ENCODE measurements at regions of chr1 and their contacts with region 1.

Region 1: DNA sequence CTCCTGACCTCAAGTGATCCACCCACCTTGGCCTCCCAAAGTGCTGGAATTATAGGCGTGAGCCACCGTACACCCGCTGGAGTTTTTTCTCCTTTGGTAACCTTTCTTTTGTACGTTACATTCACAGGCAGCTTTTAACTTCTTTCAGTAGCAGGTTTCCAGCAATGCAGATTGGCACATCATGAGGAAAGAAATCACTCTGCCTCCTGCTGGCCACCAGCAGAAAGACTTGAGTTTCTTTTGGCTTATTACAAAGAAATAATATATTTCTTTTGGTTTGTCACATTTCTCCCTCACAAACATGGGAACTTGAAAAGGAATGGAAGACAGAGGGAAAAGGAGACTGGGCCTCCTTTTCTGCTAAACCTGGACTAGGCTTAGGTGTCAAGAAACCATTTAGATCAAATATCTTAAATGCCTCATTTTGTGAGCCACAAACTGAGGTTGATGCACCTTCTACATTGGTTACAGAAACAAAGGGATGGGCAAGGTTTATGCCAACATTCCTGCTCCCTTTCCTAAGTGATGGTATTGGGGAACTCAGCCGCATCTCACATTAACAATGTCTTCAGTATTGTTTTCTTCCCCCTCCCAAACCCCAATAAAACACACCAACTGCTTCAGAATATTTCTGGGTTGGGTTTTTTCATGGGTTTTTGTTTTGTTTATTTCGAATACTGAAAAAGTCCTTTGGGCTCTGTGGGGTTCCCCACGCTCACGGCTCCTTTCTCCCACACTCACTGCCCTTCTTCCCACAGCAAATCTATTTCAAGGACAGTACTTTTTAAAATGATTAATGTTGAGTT is 7.7 kb downstream of the ENSA start:
- DNase-seq: peak; percentile 66 to 71 (median 69)
- H3K4me3 ChIP-seq: no peak overlapping the region
- H3K4me3 Mint-ChIP-seq: peak overlapping the region in 7 of 8 donors; percentile 8 to 61 (median 35)
- H3K27ac ChIP-seq: peak overlapping the region; percentile 53
- H3K27ac Mint-ChIP-seq: peak overlapping the region; percentile 82 to 95 (median 91)
- H3K4me1 ChIP-seq: peaks cover 38% of the 10 kb centered on the region
- H3K4me1 Mint-ChIP-seq: peaks cover 32 to 64% (median 51%) of the 10 kb centered on the region in 4 donors
- H3K27me3 ChIP-seq: no peaks in the 10 kb centered on the region
- H3K27me3 Mint-ChIP-seq: no peaks in the 10 kb centered on the region

Region 2: DNA sequence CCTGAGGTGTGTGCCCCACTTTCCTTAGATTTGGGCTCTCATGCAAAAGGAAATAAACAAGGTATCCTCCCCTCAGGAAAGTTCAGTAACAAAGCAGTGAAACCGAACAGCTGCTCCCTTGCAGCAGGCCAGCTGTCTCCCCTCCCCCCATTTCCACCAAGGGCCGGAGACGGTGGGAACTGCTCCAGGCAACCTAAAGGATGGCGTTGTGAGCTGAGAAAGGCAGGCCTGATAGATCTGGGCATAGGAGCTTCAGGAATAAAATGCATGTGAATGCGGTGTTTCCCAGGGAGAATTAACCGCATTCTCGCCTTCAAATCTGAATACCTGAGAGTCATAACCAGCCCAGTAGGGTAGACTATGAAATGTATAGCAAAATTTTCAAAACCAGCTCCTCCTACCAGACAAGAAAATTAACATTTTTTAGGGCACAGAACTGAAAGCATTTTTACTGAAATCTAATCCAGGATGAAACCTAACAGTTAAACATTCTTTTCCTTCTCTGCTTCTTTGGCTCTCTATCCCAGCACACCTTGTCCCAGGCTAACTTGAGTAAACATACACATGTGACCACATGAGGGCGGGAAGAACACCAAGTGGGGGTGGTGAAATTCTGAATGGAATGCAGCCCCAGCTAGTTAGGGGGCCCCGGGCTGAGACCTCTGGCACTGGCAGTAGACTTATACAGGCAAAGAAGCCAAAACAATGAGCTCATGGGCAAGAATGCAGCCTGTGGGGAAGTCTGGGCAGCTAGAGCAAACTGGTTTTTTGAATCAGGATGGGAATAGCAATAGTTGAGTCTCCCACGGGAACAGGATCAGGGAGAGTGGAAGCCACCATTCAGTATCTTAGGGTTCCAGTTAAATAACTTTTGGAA is 53.7 kb before region 1 on chr1:
- CTCF ChIA-PET with region 1: interaction called, 501 read pairs
- POLR2A ChIA-PET with region 1: interaction called, 439 read pairs
- intact Hi-C with region 1: no loop called
- DNase-seq: peak in 3 of 5 donors; percentile 33 to 72 (median 67)
- H3K4me3 ChIP-seq: peak overlapping the region; percentile 43 to 45
- H3K4me3 Mint-ChIP-seq: peak overlapping the region; percentile 87 to 98 (median 89)
- H3K27ac ChIP-seq: peak overlapping the region; percentile 58
- H3K27ac Mint-ChIP-seq: peak overlapping the region; percentile 93 to 99 (median 94)
- H3K4me1 ChIP-seq: peaks cover 93% of the 10 kb centered on the region
- H3K4me1 Mint-ChIP-seq: peaks cover 48 to 97% (median 74%) of the 10 kb centered on the region in 4 donors
- H3K27me3 ChIP-seq: no peaks in the 10 kb centered on the region
- H3K27me3 Mint-ChIP-seq: no peaks in the 10 kb centered on the region

Region 3: GRCh38 chr1:150572918-150573647 is 48.6 kb before region 1 on chr1:
- CTCF ChIA-PET with region 1: interaction called, 501 read pairs
- POLR2A ChIA-PET with region 1: interaction called, 439 read pairs
- intact Hi-C with region 1: no loop called
- DNase-seq: peak in 4 of 5 donors; percentile 21 to 44 (median 34)
- H3K4me3 ChIP-seq: peak overlapping the region; percentile 14 to 49
- H3K4me3 Mint-ChIP-seq: peak overlapping the region; percentile 86 to 100 (median 99)
- H3K27ac ChIP-seq: peak overlapping the region; percentile 27
- H3K27ac Mint-ChIP-seq: peak overlapping the region; percentile 79 to 98 (median 94)
- H3K4me1 ChIP-seq: peaks cover 78% of the 10 kb centered on the region
- H3K4me1 Mint-ChIP-seq: peaks cover 31 to 97% (median 53%) of the 10 kb centered on the region in 4 donors
- H3K27me3 ChIP-seq: no peaks in the 10 kb centered on the region
- H3K27me3 Mint-ChIP-seq: no peaks in the 10 kb centered on the region

Region 4: DNA sequence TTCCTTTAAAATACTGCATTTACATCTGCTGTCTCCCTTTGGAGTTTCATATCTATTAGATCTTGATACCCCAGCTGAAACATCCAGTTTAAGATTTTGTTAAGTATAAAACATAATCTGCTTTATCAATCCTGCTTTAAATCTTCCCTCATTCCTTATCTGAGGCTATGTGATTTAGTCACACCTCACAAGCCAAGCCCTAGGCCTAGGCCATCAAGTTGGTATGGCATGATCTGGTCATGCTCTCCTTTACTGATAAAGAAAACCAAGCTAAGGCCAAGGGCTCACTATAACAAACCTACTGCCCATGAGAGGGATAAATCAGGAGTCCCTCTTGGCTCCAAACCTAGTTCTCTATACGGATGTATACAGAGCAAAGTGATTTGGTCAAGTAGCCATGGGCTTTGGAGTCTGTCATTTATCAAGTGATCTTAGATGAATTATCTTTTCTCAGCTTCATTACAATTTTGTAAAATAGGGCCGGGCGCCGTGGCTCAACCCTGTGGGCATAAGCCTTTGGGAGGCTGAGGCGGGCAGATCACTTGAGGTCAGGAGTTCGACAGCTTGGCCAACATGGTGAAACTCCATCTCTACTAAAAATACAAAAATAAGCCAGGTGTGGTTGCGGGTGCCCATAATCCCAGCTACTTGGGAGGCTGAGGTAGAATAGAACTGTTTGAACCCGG is 15.1 kb before region 1 on chr1:
- CTCF ChIA-PET with region 1: interaction called, 23 read pairs
- POLR2A ChIA-PET with region 1: interaction called, 22 read pairs
- intact Hi-C with region 1: loop called (anchors 1 kb)
- DNase-seq: no peak
- H3K4me3 ChIP-seq: no peak overlapping the region
- H3K4me3 Mint-ChIP-seq: no peak overlapping the region
- H3K27ac ChIP-seq: no peak overlapping the region
- H3K27ac Mint-ChIP-seq: peak overlapping the region in 4 of 7 donors; percentile 13 to 79 (median 63)
- H3K4me1 ChIP-seq: peaks cover 15% of the 10 kb centered on the region
- H3K4me1 Mint-ChIP-seq: peaks cover 10 to 29% (median 13%) of the 10 kb centered on the region in 4 donors
- H3K27me3 ChIP-seq: no peaks in the 10 kb centered on the region
- H3K27me3 Mint-ChIP-seq: no peaks in the 10 kb centered on the region

Region 5: GRCh38 chr1:150765296-150765976 is 143.7 kb after region 1 on chr1 and contains the start of gene CTSS:
- CTCF ChIA-PET with region 1: no interaction called
- POLR2A ChIA-PET with region 1: no interaction called
- intact Hi-C with region 1: no loop called
- DNase-seq: peak in 4 of 5 donors; percentile 34 to 46 (median 38)
- H3K4me3 ChIP-seq: peak within 1 kb of the TSS; percentile 55 to 71
- H3K4me3 Mint-ChIP-seq: peak within 1 kb of the TSS; percentile 89 to 98 (median 93)
- H3K27ac ChIP-seq: peak within 1 kb of the TSS; percentile 51
- H3K27ac Mint-ChIP-seq: peak within 1 kb of the TSS; percentile 87 to 98 (median 95)
- H3K4me1 ChIP-seq: peaks cover 43% of the 10 kb centered on the region
- H3K4me1 Mint-ChIP-seq: peaks cover 29 to 58% (median 42%) of the 10 kb centered on the region in 4 donors
- H3K27me3 ChIP-seq: no peaks in the 10 kb centered on the region
- H3K27me3 Mint-ChIP-seq: no peaks in the 10 kb centered on the region
- total RNA-seq, gene CTSS: 119 TPM

Region 6: DNA sequence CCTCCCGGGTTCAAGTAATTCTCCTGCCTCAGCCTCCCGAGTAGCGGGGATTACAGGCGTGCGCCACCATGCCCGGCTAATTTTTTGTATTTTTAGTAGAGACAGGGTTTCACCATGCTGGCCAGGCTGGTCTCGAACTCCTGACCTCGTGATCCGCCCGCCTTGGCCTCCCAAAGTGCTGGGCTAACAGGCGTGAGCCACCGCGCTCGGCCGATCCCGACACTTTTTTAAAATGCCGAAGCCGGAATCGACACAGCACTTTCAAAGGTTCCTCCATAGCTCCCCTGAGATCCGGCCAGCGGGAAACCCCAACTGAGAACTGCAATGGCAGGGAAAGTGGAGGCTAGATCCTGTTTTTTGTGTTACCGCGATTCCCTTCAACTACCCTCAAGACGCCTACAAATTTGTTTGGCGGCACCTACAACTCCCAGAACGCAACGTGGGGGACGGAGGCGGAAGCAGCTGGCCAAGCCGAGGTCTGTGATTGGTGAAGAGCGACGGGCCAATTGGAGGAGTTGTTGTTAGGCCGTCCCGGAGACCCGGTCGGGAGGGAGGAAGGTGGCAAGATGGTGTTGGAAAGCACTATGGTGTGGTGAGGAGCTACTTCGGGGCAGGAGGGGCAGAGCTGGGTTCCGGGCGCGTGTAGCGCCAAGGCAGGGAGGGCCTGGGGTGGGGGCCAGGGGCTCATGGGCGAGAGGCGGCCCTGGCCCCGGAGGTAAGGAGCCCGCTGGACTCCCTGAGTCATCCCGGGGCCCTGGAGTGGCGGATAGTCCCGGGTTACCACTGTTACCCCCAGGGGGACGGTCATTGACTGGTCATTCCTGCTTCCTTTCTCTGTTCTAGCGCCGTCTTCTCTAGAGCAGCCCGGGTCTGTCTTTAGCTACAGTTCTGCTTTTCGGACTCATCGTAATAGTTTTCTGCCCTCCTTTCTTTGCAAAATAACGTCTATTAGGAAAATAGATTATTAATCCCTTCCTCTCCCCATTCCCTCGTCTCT is 632.8 kb after region 1 on chr1 and contains the start of gene PSMD4:
- CTCF ChIA-PET with region 1: no interaction called
- POLR2A ChIA-PET with region 1: no interaction called
- intact Hi-C with region 1: no loop called
- DNase-seq: peak; percentile 93 to 96 (median 94)
- H3K4me3 ChIP-seq: peak within 1 kb of the TSS; percentile 53 to 88
- H3K4me3 Mint-ChIP-seq: peak within 1 kb of the TSS; percentile 92 to 100 (median 96)
- H3K27ac ChIP-seq: peak within 1 kb of the TSS; percentile 65
- H3K27ac Mint-ChIP-seq: peak within 1 kb of the TSS; percentile 95 to 99 (median 97)
- H3K4me1 ChIP-seq: peaks cover 26% of the 10 kb centered on the region
- H3K4me1 Mint-ChIP-seq: peaks cover 25 to 47% (median 34%) of the 10 kb centered on the region in 4 donors
- H3K27me3 ChIP-seq: no peaks in the 10 kb centered on the region
- H3K27me3 Mint-ChIP-seq: no peaks in the 10 kb centered on the region
- total RNA-seq, gene PSMD4: 143 to 151 TPM

Region 7: DNA sequence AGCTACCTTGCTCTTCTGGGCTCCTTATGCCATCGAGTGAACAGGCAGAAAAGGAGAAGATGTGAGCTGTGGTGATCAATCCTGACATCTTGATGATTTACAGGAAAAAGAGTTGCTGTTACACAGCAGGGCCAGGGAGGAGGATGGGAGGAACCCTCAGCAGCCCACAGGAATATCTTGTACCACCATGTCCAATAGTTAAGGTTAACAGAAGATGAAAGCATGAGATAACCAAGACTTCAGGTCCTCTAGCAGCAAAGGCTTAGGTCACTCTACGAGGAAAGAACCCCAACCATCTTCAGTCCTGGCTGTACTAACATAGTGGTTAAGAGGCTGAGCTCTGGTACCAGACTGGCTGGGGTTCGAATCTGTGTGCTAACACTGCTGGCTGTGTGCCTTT is 762.9 kb after region 1 on chr1:
- CTCF ChIA-PET with region 1: no interaction called
- POLR2A ChIA-PET with region 1: no interaction called
- intact Hi-C with region 1: no loop called
- DNase-seq: no peak
- H3K4me3 ChIP-seq: no peak overlapping the region
- H3K4me3 Mint-ChIP-seq: no peak overlapping the region
- H3K27ac ChIP-seq: no peak overlapping the region
- H3K27ac Mint-ChIP-seq: no peak overlapping the region
- H3K4me1 ChIP-seq: no peaks in the 10 kb centered on the region
- H3K4me1 Mint-ChIP-seq: no peaks in the 10 kb centered on the region
- H3K27me3 ChIP-seq: no peaks in the 10 kb centered on the region
- H3K27me3 Mint-ChIP-seq: no peaks in the 10 kb centered on the region

Measured in CD4-positive, alpha-beta memory T cell (primary cell).